AG04449 (cell line): ENCODE measurements at regions of chr12 and their contacts with region 1.

Region 1: DNA sequence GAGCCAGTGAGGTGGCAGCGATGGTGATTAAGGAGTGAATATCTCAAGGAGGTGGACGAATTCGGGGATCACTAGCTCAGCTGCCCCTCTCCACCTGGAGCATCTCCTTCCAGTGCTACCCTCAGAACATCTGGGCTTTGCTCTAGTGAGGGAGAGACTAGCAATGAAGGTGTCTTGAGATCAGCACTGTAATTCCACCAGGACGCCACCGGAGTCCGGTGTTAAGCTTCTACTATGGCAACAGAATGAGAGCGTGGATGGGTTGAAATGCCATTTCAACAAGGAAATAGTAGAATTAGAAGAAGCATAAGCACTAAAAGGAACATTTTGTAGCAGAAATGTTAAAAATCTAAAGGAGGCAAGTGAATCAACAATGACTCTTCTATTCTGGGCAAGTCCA is 61.1 kb downstream of the NTF3 start:
- DNase-seq: no peak
- H3K4me3 ChIP-seq: no peak overlapping the region
- CTCF ChIP-seq: peak; percentile 16

Region 2: GRCh38 chr12:5480218-5480937 is 12.6 kb before region 1 on chr12:
- CTCF ChIA-PET with region 1: interaction called, 14 read pairs
- POLR2A ChIA-PET with region 1: no interaction called
- DNase-seq: no peak
- H3K4me3 ChIP-seq: no peak overlapping the region; the same call in 1 of the 2 replicates
- CTCF ChIP-seq: no peak